BJ (cell line): ENCODE measurements at regions of chr19 and their contacts with region 1.

Region 1: DNA sequence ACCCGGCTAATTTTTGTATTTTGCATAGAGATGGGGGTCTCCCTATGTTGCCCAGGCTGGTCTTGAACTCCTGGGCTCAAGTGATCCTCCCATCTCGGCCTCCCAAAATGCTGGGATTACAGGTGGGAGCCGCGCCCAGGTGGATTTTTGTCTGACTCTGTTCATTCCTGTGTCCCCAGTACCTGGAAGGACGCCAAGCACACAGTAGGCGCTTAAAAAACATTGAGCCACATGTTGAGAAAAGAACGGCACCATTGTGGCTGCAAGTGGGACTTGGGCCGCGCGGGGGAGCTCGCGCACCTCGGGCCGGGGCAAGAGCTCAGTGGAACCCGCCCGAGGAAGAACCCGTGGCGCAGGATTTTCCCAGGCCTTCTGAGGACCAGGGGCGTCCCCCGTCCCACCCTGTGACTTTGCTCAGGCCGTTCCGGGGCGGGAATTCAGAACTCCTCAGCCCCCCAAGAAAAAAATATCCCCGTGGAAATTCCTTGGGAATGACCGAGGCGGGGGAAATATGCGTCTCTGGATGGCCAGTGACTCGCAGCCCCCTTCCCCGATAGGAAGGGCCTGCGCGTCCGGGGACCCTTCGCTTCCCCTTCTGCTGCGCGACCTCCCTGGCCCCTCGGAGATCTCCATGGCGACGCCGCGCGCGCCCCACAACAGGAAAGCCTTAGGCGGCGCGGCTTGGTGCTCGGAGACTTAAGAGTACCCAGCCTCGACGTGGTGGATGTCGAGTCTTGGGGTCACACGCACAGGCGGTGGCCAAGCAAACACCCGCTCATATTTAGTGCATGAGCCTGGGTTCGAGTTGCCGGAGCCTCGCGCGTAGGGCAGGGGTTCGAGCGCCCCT is 1.4 kb upstream of the ICAM1 start:
- DNase-seq: no peak
- H3K4me3 ChIP-seq: no peak overlapping the region; the same call in 1 of the 2 replicates
- H3K27me3 ChIP-seq: no peaks in the 10 kb centered on the region
- CTCF ChIP-seq: peak; percentile 97

Region 2: GRCh38 chr19:10259162-10259905 is 10.2 kb before region 1 on chr19:
- CTCF ChIA-PET with region 1: interaction called, 53 read pairs
- POLR2A ChIA-PET with region 1: interaction called, 5 read pairs
- DNase-seq: no peak
- H3K4me3 ChIP-seq: no peak overlapping the region
- H3K27me3 ChIP-seq: no peaks in the 10 kb centered on the region
- CTCF ChIP-seq: peak; percentile 80

Region 3: DNA sequence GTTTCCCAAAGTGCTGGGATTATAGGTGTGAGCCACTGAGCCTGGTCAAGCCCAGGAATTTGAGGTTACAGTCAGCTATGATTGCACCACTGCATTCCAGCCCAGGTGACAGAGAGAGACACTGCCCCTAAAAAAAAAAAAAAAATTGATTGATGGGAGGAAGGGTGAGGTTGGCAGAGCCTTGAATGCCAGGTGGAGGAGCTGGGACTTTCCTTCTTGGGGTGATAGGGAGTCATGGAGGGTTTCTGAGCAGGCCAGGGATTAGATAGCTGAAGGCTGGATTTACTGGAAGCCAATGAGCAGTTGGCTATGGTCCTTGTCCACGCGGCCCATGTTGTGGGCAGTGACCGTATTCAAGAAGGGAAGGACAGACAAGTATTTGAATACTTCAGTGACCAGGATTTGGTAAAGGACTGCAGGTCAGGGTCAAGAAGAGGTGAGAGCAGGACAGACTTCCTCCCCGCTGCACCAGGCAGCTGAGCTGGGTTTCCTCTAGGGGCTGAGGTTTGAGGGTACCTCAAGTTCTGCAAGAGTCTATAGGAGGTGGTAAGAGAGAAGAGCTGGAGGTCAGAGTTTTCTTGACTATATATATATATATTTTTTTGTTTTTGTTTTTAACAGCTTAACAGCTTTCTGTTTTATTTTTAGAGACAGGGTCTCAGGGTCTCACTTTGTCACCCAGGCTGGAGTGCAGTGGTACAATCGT is 10.3 kb after region 1 on chr19:
- CTCF ChIA-PET with region 1: interaction called, 12 read pairs
- POLR2A ChIA-PET with region 1: no interaction called
- DNase-seq: no peak
- H3K4me3 ChIP-seq: no peak overlapping the region
- H3K27me3 ChIP-seq: no peaks in the 10 kb centered on the region
- CTCF ChIP-seq: no peak

Region 4: GRCh38 chr19:10292206-10292788 is 22.7 kb after region 1 on chr19:
- CTCF ChIA-PET with region 1: interaction called, 45 read pairs
- POLR2A ChIA-PET with region 1: interaction called, 4 read pairs
- DNase-seq: no peak
- H3K4me3 ChIP-seq: peak overlapping the region; percentile 55
- H3K27me3 ChIP-seq: peaks cover 10% of the 10 kb centered on the region
- CTCF ChIP-seq: no peak

Region 5: GRCh38 chr19:10380313-10381102 is 111.0 kb after region 1 on chr19 and contains the start of gene TYK2:
- CTCF ChIA-PET with region 1: interaction called, 228 read pairs
- POLR2A ChIA-PET with region 1: no interaction called
- DNase-seq: peak; percentile 93
- H3K4me3 ChIP-seq: peak within 1 kb of the TSS; percentile 87
- H3K27me3 ChIP-seq: no peaks in the 10 kb centered on the region
- CTCF ChIP-seq: no peak
- polyA plus RNA-seq, gene TYK2: 31.7 and 40.9 TPM in 2 replicates

Region 6: GRCh38 chr19:10388957-10389356 is 119.4 kb after region 1 on chr19:
- CTCF ChIA-PET with region 1: interaction called, 228 read pairs
- POLR2A ChIA-PET with region 1: interaction called, 5 read pairs
- DNase-seq: no peak
- H3K4me3 ChIP-seq: no peak overlapping the region
- H3K27me3 ChIP-seq: no peaks in the 10 kb centered on the region
- CTCF ChIP-seq: peak; percentile 93

Region 7: DNA sequence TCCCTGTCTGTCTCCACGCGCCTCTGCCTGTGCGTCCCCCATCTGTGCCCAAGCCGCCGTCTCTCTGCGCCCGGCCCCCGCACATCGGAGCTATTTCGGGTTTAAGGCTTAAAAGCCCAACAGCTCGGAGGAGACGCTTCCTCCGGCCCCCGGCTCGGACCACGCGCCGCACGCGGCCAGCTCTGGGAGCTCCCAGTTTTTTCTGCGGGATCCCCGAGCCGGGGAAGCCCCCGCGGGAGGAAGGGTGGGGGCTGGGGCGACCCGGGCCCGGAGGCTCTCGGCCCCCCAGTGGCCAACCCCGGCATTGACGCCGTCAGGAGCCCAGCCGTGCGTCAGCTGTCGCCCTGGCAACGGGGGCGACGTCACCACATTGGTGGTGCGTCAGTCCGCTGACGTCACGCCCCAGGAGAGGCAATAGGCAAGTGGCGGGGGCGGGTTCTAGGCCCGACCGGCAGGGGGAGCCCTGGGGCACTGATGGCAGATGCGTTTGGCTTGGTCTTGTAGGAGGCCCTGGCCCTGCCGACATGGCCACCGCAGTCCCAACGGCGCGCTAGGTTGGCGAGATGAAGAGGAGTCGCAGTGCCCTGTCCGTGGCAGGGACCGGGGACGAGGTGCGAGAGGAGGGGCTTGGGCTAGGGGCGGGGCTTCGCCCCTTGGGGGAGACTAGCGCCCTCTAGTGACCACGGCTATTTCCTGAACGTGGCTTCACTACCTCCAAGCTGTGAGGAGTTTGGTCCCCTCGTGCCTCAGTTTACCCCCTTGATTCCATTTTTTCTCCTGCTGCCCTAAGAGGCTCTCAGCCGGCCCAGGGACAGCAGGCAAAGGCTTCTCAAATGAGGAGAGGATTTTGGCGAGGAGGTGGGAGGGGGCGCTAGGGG is 147.1 kb after region 1 on chr19:
- CTCF ChIA-PET with region 1: interaction called, 24 read pairs
- POLR2A ChIA-PET with region 1: no interaction called
- DNase-seq: no peak
- H3K4me3 ChIP-seq: peak overlapping the region; percentile 54
- H3K27me3 ChIP-seq: peaks cover 26% of the 10 kb centered on the region
- CTCF ChIP-seq: peak; percentile 82

Region 8: GRCh38 chr19:11570039-11570462 is 1300.5 kb after region 1 on chr19:
- CTCF ChIA-PET with region 1: no interaction called
- POLR2A ChIA-PET with region 1: no interaction called
- DNase-seq: no peak
- H3K4me3 ChIP-seq: no peak overlapping the region
- H3K27me3 ChIP-seq: no peaks in the 10 kb centered on the region
- CTCF ChIP-seq: no peak